Activated CD4-positive, alpha-beta memory T cell treated with anti-CD3 and anti-CD28 coated beads for 36 hours (primary cell): ENCODE measurements at regions of chr3 and their contacts with region 1.

Region 1: GRCh38 chr3:53938645-53939044 is 47.0 kb upstream of the SELENOK start:
- DNase-seq: peak; percentile 39
- H3K4me3 Mint-ChIP-seq: no peak overlapping the region
- H3K27ac Mint-ChIP-seq: no peak overlapping the region
- H3K4me1 Mint-ChIP-seq: no peaks in the 10 kb centered on the region
- H3K27me3 Mint-ChIP-seq: peaks cover 27% of the 10 kb centered on the region

Region 2: GRCh38 chr3:53956586-53956985 is 17.9 kb after region 1 on chr3:
- CTCF ChIA-PET with region 1: interaction called, 12 read pairs
- POLR2A ChIA-PET with region 1: no interaction called
- intact Hi-C with region 1: no loop called
- DNase-seq: no peak
- H3K4me3 Mint-ChIP-seq: no peak overlapping the region
- H3K27ac Mint-ChIP-seq: no peak overlapping the region
- H3K4me1 Mint-ChIP-seq: no peaks in the 10 kb centered on the region
- H3K27me3 Mint-ChIP-seq: peaks cover 3% of the 10 kb centered on the region

Region 3: DNA sequence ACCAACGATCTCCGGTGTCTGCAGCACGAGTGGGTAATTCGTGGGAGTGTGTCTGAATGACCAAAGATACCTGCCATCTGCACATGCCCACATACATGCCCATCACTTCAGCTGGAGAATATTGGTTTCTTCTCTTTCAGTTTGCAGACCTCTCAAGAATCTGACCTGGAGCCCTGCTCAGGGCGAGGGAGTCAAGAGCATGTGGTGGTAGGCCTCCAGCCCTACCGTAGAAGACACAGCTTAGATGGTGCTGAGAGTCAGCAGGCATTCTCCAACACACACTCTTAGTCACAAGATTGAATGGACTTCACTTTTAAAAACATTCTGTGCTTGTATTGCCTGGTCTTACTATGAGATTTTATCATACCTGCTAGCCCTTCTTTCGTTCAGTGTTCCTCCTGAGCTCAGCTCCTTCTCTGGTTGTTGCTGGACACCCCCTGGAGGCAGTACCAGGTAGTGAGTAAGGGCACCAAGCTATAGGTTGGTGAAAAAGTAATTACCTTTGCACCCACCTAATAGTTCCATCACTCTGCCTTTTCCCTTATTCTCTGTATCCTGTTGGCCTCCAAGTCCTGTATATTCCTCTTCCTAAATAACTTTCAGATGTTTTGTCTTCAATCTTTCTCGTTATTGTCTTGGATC is 435.7 kb after region 1 on chr3:
- CTCF ChIA-PET with region 1: interaction called, 11 read pairs
- POLR2A ChIA-PET with region 1: no interaction called
- intact Hi-C with region 1: no loop called
- DNase-seq: no peak
- H3K4me3 Mint-ChIP-seq: no peak overlapping the region
- H3K27ac Mint-ChIP-seq: no peak overlapping the region
- H3K4me1 Mint-ChIP-seq: no peaks in the 10 kb centered on the region
- H3K27me3 Mint-ChIP-seq: peaks cover 7% of the 10 kb centered on the region